ENCODE measurements at regions of chr12 and their contacts with region 1.

Region 1: DNA sequence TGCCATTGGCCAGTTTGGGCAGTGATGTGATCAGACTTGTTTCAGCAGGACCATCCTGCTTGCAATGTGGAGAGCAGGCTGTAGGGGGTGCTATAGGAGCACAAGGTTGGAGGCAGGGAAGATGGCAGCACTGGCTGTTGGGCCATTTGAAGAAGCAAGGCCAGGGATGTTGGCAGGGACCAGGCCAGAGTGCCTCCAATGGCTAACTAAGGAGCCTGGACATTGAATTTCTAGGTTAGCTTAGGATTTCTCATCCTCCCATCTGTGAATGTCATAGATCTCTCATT is 23.5 kb downstream of the FGF23 start:
- DNase-seq: peak in 8 of 9 experiments; percentile 10 to 51 (median 44)
- ATAC-seq: no peak
- H3K4me3 ChIP-seq: no peak overlapping the region
- H3K4me3 Mint-ChIP-seq: no peak overlapping the region
- H3K27ac ChIP-seq: no peak overlapping the region
- H3K27ac Mint-ChIP-seq: no peak overlapping the region
- H3K4me1 ChIP-seq: no peaks in the 10 kb centered on the region
- H3K4me1 Mint-ChIP-seq: peaks cover 8% of the 10 kb centered on the region
- H3K27me3 ChIP-seq: no peaks in the 10 kb centered on the region
- H3K27me3 Mint-ChIP-seq: no peaks in the 10 kb centered on the region
- CTCF ChIP-seq: peak; percentile 30

Region 2: DNA sequence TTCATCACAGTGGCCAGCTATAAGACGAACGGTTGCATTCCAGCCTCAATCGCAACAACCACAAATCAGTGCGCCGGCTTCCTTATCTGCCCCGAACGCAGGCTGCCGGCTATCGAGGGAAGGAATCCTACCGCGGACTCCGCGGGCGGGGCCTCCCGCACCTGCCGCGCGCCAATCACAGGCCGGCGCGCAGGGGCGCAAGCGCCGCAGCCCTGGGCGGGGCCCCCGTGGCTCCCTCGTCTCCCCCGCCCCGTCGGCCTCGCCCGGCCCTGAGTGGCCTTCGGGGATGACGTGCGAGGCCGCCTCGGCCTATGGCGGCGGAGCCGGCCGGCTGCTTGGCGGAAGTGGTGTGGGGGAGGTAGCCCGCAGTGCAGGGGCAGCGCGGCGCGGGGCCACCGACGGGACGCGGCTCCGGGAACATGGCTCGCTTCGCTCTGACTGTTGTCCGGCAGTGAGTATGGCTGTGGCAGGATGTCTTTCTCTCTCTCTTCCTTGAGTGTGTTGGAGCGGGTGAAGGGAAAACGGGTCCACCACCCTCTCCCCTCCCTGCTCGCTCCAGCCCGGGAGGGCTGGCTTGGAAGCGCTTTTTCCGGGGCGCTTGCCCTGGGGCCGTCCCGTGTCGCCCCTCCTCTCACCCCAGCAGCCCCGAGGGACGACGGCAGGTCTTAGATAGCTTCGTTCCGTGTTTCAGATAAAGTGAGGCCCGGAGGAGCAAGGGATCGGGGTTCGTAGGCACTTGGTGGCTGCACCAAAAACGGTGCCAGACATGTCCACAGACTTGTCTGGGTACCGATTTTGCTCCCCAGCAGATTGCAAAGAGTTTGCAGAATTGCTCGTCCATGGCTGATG is 34.9 kb before region 1 on chr12 and contains the start of gene TIGAR:
- CTCF ChIA-PET with region 1: no interaction called
- POLR2A ChIA-PET with region 1: interaction called, 3 read pairs
- intact Hi-C with region 1: loop called (anchors 2 kb)
- DNase-seq: peak; percentile 79 to 97 (median 90)
- ATAC-seq: peak; percentile 96
- H3K4me3 ChIP-seq: peak within 1 kb of the TSS; percentile 86 to 89
- H3K4me3 Mint-ChIP-seq: peak within 1 kb of the TSS; percentile 96
- H3K27ac ChIP-seq: peak within 1 kb of the TSS; percentile 81 to 83
- H3K27ac Mint-ChIP-seq: peak within 1 kb of the TSS; percentile 95
- H3K4me1 ChIP-seq: peaks cover 25% of the 10 kb centered on the region
- H3K4me1 Mint-ChIP-seq: peaks cover 40% of the 10 kb centered on the region
- H3K27me3 ChIP-seq: no peaks in the 10 kb centered on the region
- H3K27me3 Mint-ChIP-seq: no peaks in the 10 kb centered on the region
- CTCF ChIP-seq: no peak
- total RNA-seq, gene TIGAR: 14.0 to 15.8 TPM

Region 3: GRCh38 chr12:4421590-4422031 is 65.6 kb after region 1 on chr12:
- CTCF ChIA-PET with region 1: interaction called, 5 read pairs
- POLR2A ChIA-PET with region 1: no interaction called
- intact Hi-C with region 1: loop called (anchors 5 kb)
- DNase-seq: peak in 4 of 9 experiments; percentile 24 to 60 (median 41)
- ATAC-seq: no peak
- H3K4me3 ChIP-seq: no peak overlapping the region
- H3K4me3 Mint-ChIP-seq: no peak overlapping the region
- H3K27ac ChIP-seq: no peak overlapping the region
- H3K27ac Mint-ChIP-seq: no peak overlapping the region
- H3K4me1 ChIP-seq: no peaks in the 10 kb centered on the region
- H3K4me1 Mint-ChIP-seq: no peaks in the 10 kb centered on the region
- H3K27me3 ChIP-seq: no peaks in the 10 kb centered on the region
- H3K27me3 Mint-ChIP-seq: peaks cover 5% of the 10 kb centered on the region
- CTCF ChIP-seq: peak; percentile 89

Region 4: GRCh38 chr12:4506870-4507269 is 150.9 kb after region 1 on chr12:
- CTCF ChIA-PET with region 1: no interaction called
- POLR2A ChIA-PET with region 1: no interaction called
- intact Hi-C with region 1: loop called in 1 of 2 experiments (anchors 5 kb)
- DNase-seq: peak in 2 of 9 experiments; percentile 56 to 77
- ATAC-seq: peak; percentile 98
- H3K4me3 ChIP-seq: no peak overlapping the region
- H3K4me3 Mint-ChIP-seq: peak overlapping the region; percentile 38
- H3K27ac ChIP-seq: peak overlapping the region; percentile 0 to 16
- H3K27ac Mint-ChIP-seq: peak overlapping the region; percentile 85
- H3K4me1 ChIP-seq: peaks cover 16% of the 10 kb centered on the region
- H3K4me1 Mint-ChIP-seq: peaks cover 27% of the 10 kb centered on the region
- H3K27me3 ChIP-seq: no peaks in the 10 kb centered on the region
- H3K27me3 Mint-ChIP-seq: no peaks in the 10 kb centered on the region
- CTCF ChIP-seq: no peak

Region 5: GRCh38 chr12:4526923-4527546 is 171.1 kb after region 1 on chr12:
- CTCF ChIA-PET with region 1: interaction called, 4 read pairs
- POLR2A ChIA-PET with region 1: no interaction called
- intact Hi-C with region 1: loop called (anchors 1 to 2 kb)
- DNase-seq: peak in 2 of 9 experiments; percentile 14 to 34
- ATAC-seq: peak; percentile 52
- H3K4me3 ChIP-seq: no peak overlapping the region
- H3K4me3 Mint-ChIP-seq: no peak overlapping the region
- H3K27ac ChIP-seq: no peak overlapping the region
- H3K27ac Mint-ChIP-seq: no peak overlapping the region
- H3K4me1 ChIP-seq: peaks cover 9% of the 10 kb centered on the region
- H3K4me1 Mint-ChIP-seq: peaks cover 5% of the 10 kb centered on the region
- H3K27me3 ChIP-seq: no peaks in the 10 kb centered on the region
- H3K27me3 Mint-ChIP-seq: no peaks in the 10 kb centered on the region
- CTCF ChIP-seq: peak; percentile 93

Region 6: DNA sequence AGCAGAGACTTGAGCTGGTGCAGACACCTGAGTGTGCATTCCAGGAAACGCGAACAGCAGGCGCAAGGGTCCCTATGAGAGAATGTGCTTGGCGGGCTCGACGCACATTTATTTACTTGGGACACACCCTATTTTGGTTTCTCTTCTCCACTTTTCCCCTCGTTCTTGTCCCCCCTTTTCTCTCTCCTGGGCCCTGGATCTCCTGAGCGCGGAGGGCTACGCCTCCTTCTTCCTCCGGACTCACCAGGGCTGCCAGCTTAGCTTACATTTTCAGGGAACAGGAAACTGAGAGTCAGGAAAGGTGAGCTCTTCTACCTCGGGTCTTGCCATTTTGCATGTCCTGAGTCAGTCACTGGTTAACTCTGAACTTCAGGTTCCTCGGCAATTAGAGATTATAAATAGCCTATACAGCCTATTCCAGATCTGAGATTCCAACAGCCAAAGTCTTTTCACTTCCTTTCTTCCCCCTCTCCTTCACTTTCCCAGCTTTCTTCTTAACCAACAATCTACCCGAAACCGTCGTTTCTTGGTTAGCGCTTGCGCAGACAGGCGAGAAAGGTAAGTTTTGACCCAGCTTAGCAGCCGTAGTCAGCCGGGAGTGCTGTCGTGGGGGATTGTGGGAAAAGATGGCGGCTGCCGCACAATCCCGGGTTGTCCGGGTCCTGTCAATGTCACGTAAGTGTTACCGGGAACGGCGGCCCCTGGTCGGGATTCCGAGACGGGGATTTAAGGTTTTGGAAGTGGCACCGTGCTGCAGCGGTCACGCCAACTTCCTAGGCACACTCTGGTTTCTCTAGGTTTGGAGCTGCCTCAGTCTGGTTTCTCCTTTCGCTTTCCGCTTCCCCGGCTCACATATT is 292.7 kb after region 1 on chr12 and contains the starts of genes AKAP3 and NDUFA9:
- CTCF ChIA-PET with region 1: no interaction called
- POLR2A ChIA-PET with region 1: no interaction called
- intact Hi-C with region 1: loop called in 1 of 2 experiments (anchors 5 kb)
- DNase-seq: peak; percentile 58 to 90 (median 82)
- ATAC-seq: peak; percentile 96
- H3K4me3 ChIP-seq: peak within 1 kb of the TSS; percentile 68 to 92
- H3K4me3 Mint-ChIP-seq: peak within 1 kb of the TSS; percentile 90
- H3K27ac ChIP-seq: peak within 1 kb of the TSS; percentile 62 to 77
- H3K27ac Mint-ChIP-seq: peak within 1 kb of the TSS; percentile 93
- H3K4me1 ChIP-seq: peaks cover 22% of the 10 kb centered on the region
- H3K4me1 Mint-ChIP-seq: peaks cover 51% of the 10 kb centered on the region
- H3K27me3 ChIP-seq: no peaks in the 10 kb centered on the region
- H3K27me3 Mint-ChIP-seq: no peaks in the 10 kb centered on the region
- CTCF ChIP-seq: no peak
- total RNA-seq, gene AKAP3: 1.1 to 1.3 TPM
- total RNA-seq, gene NDUFA9: 94.2 to 95.2 TPM

Region 7: DNA sequence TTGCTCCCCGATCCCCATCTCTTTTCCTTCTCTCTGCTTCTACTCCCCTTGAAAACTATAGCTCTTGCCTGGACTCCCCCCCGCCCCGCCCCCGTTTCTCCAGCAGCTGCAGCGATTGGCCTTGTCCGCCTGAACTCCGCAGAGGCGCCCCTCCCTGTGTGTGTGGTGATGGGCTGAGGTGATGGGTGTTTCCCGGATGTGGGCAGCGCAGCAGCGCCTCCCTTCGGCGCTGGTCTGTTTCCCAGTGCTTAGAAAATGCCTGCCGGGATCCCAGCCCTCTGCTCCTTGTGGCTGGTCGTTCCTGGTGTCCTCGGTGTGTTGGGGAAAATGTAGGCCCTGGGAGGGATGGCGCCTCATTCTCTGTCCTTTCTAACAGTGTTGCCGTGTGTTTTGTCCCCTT is 407.6 kb after region 1 on chr12:
- CTCF ChIA-PET with region 1: interaction called, 4 read pairs
- POLR2A ChIA-PET with region 1: no interaction called
- intact Hi-C with region 1: loop called in 1 of 2 experiments (anchors 2 kb)
- DNase-seq: peak in 3 of 9 experiments; percentile 3 to 24 (median 17)
- ATAC-seq: no peak
- H3K4me3 ChIP-seq: no peak overlapping the region
- H3K4me3 Mint-ChIP-seq: no peak overlapping the region
- H3K27ac ChIP-seq: no peak overlapping the region
- H3K27ac Mint-ChIP-seq: no peak overlapping the region
- H3K4me1 ChIP-seq: no peaks in the 10 kb centered on the region
- H3K4me1 Mint-ChIP-seq: peaks cover 3% of the 10 kb centered on the region
- H3K27me3 ChIP-seq: no peaks in the 10 kb centered on the region
- H3K27me3 Mint-ChIP-seq: peaks cover 4% of the 10 kb centered on the region
- CTCF ChIP-seq: no peak